Endothelial cell of umbilical vein (primary cell): ENCODE measurements at regions of chr6 and their contacts with region 1.

Region 1: DNA sequence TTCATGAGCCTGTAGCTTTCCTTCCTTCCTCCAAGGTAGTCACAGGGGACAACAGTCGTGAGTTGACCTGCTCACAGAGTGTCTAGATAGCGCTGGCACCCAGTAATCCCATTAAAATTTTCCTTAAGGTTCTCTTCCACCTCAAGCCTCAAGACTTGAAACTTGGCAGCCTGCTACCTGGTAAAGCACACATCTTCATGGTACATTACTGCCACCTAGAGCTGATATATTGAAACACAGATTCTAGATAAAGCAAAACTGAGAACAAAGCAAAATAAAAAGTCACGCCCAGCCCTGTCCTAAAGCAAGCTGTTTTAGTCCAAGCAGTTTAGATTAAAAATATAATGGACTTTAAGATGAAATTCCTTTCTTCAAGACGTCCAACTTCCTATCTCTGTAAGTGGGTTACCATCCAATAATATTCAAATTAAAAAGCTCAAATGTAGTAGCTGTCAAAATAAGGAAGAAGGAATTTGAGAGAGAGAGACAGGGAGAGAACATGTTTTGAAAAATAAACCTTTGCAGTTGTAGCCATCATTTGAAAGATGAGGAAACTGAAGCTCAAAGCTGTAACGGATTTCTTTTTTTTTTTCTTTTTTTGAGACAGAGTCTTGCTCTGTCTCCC is 50.7 kb upstream of the CD83 start:
- DNase-seq: peak; percentile 61
- H3K4me3 ChIP-seq: no peak overlapping the region
- H3K27ac ChIP-seq: no peak overlapping the region
- H3K4me1 ChIP-seq: no peaks in the 10 kb centered on the region
- H3K27me3 ChIP-seq: peaks cover 5 to 18% of the 10 kb centered on the region in 2 experiments
- CTCF ChIP-seq: peak; percentile 47 to 52
- POLR2A ChIP-seq: no peak

Region 2: GRCh38 chr6:13624871-13625288 is 442.0 kb before region 1 on chr6:
- CTCF ChIA-PET with region 1: interaction called, 8 read pairs
- POLR2A ChIA-PET with region 1: no interaction called
- dilution Hi-C with region 1: no loop called
- intact Hi-C with region 1: loop called (anchors 10 kb)
- DNase-seq: peak; percentile 40
- H3K4me3 ChIP-seq: no peak overlapping the region
- H3K27ac ChIP-seq: no peak overlapping the region
- H3K4me1 ChIP-seq: no peaks in the 10 kb centered on the region
- H3K27me3 ChIP-seq: no peaks in the 10 kb centered on the region
- CTCF ChIP-seq: peak; percentile 54 to 63
- POLR2A ChIP-seq: peak; percentile 47

Region 3: DNA sequence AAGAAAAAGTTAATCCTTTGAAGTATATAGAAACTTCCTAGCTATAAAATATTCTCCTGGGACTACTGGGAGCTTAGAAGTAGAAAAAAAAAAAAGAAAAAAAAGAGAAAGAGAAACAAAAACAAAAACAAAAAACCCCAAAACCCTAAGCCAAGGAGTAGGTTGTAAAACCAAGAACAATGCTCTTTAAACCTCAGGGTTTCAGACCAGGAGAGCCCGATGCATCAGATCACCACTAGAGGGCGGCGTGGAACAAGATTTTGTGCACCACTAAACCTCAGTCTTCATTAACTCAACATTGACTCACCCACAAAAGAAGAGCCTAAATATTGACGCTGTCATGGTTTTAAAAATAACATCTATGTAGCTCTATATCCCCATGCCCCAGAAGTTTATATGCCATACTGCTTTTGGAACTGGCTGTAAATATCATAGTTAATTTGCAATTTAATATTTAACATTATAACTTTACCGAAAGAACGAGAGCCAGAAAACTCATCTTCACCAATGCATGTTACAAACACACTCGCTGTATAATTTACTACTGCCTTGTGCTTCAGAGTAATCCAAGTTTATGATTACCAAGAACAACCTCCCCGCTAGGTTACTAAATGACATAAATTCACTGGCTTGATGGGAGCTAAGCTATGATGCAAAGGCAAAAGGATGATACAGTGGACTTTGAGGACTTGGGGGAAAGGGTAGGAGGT is 271.7 kb before region 1 on chr6:
- CTCF ChIA-PET with region 1: interaction called, 22 read pairs
- POLR2A ChIA-PET with region 1: no interaction called
- dilution Hi-C with region 1: no loop called
- intact Hi-C with region 1: loop called (anchors 1 kb)
- DNase-seq: peak; percentile 75
- H3K4me3 ChIP-seq: no peak overlapping the region
- H3K27ac ChIP-seq: peak overlapping the region; percentile 38
- H3K4me1 ChIP-seq: peaks cover 10% of the 10 kb centered on the region
- H3K27me3 ChIP-seq: no peaks in the 10 kb centered on the region
- CTCF ChIP-seq: peak; percentile 89 to 96
- POLR2A ChIP-seq: no peak

Region 4: DNA sequence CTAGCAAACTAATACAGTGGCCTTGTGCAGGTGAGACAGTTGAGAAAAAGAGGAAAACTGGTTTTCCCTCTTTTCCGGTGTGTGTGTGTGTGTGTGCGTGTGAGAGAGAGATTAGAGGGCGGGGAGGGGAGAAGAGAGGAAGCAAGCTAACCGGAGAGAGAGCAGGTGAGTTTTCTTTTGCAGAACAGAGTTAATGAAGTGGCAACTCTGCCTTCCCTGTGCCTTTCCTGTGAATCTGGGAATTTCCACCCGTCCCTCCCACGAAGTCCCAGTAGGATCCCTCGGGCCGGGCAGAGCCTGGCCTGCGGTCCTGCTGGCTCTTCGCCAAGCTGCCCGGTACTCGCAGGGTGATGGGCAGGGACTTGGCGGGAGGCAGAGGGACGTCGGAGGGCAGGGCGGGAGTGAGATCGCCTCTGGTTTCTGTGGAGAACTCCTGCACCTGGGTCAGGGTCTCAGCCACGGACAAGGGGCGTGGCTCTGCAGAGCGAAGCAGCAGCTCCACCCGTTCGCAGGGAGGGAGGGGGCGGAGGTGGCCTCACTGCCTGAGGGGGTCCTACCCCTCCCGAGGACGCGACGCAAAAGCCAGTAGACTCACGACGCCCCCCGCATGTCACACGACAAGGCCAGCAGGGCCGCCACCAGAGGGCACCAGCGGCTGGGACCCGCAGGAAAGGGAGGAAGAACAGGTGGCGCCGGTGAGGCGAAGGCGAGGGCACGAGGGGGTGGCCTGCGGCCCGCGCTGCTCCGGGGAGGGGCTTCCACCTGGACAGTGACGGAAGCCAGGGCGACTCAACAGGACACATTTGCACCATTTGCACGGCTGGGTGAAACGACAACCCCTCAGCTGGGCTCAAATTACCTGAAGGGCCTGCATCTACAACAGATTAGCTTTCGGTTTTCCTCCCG is 193.4 kb before region 1 on chr6:
- CTCF ChIA-PET with region 1: interaction called, 24 read pairs
- POLR2A ChIA-PET with region 1: no interaction called
- dilution Hi-C with region 1: no loop called
- intact Hi-C with region 1: no loop called
- DNase-seq: peak; percentile 18
- H3K4me3 ChIP-seq: peak overlapping the region in 1 of 3 experiments; percentile 17
- H3K27ac ChIP-seq: no peak overlapping the region
- H3K4me1 ChIP-seq: no peaks in the 10 kb centered on the region
- H3K27me3 ChIP-seq: peaks cover 2 to 4% of the 10 kb centered on the region in 2 experiments
- CTCF ChIP-seq: peak; percentile 67 to 79
- POLR2A ChIP-seq: no peak

Region 5: DNA sequence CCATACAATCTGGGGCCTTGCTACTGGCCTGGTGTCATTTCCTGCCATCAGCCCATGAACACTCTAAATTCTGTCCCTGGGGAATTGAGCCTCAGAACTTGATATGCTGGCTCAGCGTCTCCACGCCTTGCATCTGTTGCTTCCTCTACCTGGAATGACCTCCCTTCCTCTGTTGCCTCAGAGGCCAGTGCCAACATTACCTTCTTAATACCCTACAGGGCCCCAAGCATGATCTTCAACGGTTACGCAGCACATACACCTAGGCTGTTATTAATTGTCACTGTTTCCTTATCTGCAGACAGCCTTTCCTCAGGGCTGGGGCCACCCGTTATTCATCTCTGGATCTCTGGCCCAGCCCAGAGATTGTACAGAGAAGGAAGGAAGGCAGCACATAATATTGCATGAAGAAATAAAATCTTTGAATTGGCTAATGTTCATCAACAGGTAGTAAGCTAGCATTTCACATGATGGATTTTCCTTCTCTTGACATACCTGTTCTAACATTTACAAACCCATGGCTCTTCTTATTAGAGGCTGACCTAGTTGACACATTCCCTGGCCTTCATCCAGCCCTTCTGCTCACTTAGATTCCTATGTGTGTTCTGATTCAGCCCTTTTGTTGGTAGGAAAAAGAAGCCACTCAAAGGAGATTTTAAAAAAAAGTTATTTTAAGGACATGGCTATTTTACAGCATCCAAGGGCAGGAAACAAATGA is 150.5 kb before region 1 on chr6:
- CTCF ChIA-PET with region 1: interaction called, 188 read pairs
- POLR2A ChIA-PET with region 1: no interaction called
- dilution Hi-C with region 1: no loop called
- intact Hi-C with region 1: loop called (anchors 1 kb)
- DNase-seq: no peak
- H3K4me3 ChIP-seq: no peak overlapping the region
- H3K27ac ChIP-seq: no peak overlapping the region
- H3K4me1 ChIP-seq: peaks cover 6% of the 10 kb centered on the region
- H3K27me3 ChIP-seq: peaks cover 8 to 11% of the 10 kb centered on the region in 2 experiments
- CTCF ChIP-seq: no peak
- POLR2A ChIP-seq: no peak

Region 6: GRCh38 chr6:13924146-13924948 is 142.5 kb before region 1 on chr6:
- CTCF ChIA-PET with region 1: interaction called, 28 read pairs
- POLR2A ChIA-PET with region 1: no interaction called
- dilution Hi-C with region 1: no loop called
- intact Hi-C with region 1: no loop called
- DNase-seq: peak; percentile 37
- H3K4me3 ChIP-seq: peak overlapping the region; percentile 43 to 55 (median 53)
- H3K27ac ChIP-seq: no peak overlapping the region
- H3K4me1 ChIP-seq: peaks cover 17% of the 10 kb centered on the region
- H3K27me3 ChIP-seq: peaks cover 29 to 52% of the 10 kb centered on the region in 2 experiments
- CTCF ChIP-seq: no peak
- POLR2A ChIP-seq: no peak

Region 7: GRCh38 chr6:14055541-14055940 is 11.4 kb before region 1 on chr6:
- CTCF ChIA-PET with region 1: interaction called, 19 read pairs
- POLR2A ChIA-PET with region 1: no interaction called
- dilution Hi-C with region 1: no loop called
- intact Hi-C with region 1: no loop called
- DNase-seq: no peak
- H3K4me3 ChIP-seq: no peak overlapping the region
- H3K27ac ChIP-seq: no peak overlapping the region
- H3K4me1 ChIP-seq: no peaks in the 10 kb centered on the region
- H3K27me3 ChIP-seq: peaks cover 2 to 12% of the 10 kb centered on the region in 2 experiments
- CTCF ChIP-seq: no peak
- POLR2A ChIP-seq: no peak

Region 8: GRCh38 chr6:14102383-14102782 is 35.5 kb after region 1 on chr6:
- CTCF ChIA-PET with region 1: no interaction called
- POLR2A ChIA-PET with region 1: no interaction called
- dilution Hi-C with region 1: no loop called
- intact Hi-C with region 1: no loop called
- DNase-seq: no peak
- H3K4me3 ChIP-seq: no peak overlapping the region
- H3K27ac ChIP-seq: no peak overlapping the region
- H3K4me1 ChIP-seq: no peaks in the 10 kb centered on the region
- H3K27me3 ChIP-seq: no peaks in the 10 kb centered on the region
- CTCF ChIP-seq: no peak
- POLR2A ChIP-seq: no peak